Right cardiac atrium (tissue), 5 donors: ENCODE measurements at regions of chr12 and their contacts with region 1.

Region 1: DNA sequence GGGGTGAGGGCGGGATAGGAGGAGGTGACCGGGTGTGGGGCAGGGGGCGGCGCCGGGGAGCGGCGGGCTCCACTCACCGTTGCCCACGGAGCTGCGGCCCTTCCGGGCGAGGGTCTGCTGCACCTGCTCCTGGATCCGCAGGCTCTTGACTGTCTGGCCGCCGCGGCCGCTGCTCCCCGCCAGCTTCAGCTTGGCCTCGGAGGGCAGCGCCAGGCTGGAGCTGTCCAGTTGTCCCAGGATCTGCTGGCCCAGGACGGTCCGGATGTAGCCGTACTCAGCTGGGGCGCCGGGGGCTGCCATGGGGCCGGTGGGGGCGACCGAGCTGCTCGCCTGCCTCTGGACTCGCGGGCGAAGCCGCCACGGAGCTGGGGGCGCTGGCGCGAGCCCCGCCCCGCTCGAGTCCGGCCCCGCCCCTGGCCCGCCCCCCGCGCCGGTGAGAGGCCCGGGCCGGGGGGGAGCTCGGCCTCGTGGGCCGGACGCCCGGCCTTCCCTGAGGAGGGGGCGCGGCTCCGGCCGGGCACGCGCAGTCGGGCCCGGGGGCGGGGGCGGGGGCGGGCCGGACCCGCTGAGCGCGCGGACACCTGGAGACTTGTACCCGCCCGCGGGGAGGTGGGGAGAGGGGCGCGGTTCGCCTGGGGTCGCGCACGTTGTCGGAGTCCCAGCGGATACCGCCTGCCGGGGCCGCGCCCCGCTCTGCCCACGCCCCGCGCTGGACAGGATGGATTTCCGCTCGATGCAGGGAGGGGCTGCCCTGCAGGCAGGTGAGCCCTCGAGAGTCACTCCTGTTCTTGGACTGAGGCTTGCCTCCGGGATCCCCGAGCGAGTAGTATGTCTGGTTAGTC is at the start of gene PKP2:
- DNase-seq: peak; percentile 44 to 83 (median 80)
- ATAC-seq: peak; percentile 90 to 91
- H3K4me3 ChIP-seq: peak within 1 kb of the TSS; percentile 59
- H3K27ac ChIP-seq: peak within 1 kb of the TSS; percentile 65
- H3K4me1 ChIP-seq: no peaks in the 10 kb centered on the region
- H3K27me3 ChIP-seq: no peaks in the 10 kb centered on the region
- total RNA-seq, gene PKP2: 147 to 374 (median 229) TPM

Region 2: DNA sequence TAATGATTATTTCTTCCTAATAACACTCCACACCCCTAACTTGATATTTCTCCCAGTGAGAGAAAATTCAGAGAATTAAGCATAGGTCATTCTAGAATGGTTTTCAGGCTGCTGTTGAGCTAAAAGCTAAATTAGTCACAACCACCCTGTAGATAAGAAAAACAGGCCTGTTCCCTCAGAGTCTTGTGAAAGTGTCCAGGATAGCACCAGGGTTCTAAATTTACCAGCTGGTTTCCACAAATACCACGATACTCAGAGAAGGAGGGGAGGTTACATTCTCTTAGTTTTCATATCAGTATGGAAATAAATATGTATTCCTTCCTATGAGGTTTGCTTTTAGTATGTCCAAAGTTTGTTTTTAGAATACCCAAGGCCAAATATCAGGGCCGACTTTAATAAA is 74.9 kb before region 1 on chr12:
- intact Hi-C with region 1: loop called in 1 of 4 experiments (anchors 10 kb)
- DNase-seq: no peak
- ATAC-seq: peak; percentile 80 to 81
- H3K4me3 ChIP-seq: no peak overlapping the region
- H3K27ac ChIP-seq: no peak overlapping the region
- H3K4me1 ChIP-seq: no peaks in the 10 kb centered on the region
- H3K27me3 ChIP-seq: no peaks in the 10 kb centered on the region

Region 3: GRCh38 chr12:32843528-32844095 is 53.0 kb before region 1 on chr12:
- intact Hi-C with region 1: loop called in 1 of 4 experiments (anchors 10 kb)
- DNase-seq: no peak
- ATAC-seq: peak in 1 of 2 donors; percentile 22
- H3K4me3 ChIP-seq: no peak overlapping the region
- H3K27ac ChIP-seq: peak overlapping the region; percentile 38
- H3K4me1 ChIP-seq: peaks cover 2% of the 10 kb centered on the region
- H3K27me3 ChIP-seq: no peaks in the 10 kb centered on the region

Region 4: GRCh38 chr12:32918890-32919801 is 22.5 kb after region 1 on chr12:
- intact Hi-C with region 1: no loop called
- DNase-seq: no peak
- ATAC-seq: peak; percentile 48 to 73
- H3K4me3 ChIP-seq: no peak overlapping the region
- H3K27ac ChIP-seq: no peak overlapping the region
- H3K4me1 ChIP-seq: no peaks in the 10 kb centered on the region
- H3K27me3 ChIP-seq: no peaks in the 10 kb centered on the region